Esophagus muscularis mucosa (tissue), 4 donors: ENCODE measurements at regions of chr2 and their contacts with region 1.

Region 1: DNA sequence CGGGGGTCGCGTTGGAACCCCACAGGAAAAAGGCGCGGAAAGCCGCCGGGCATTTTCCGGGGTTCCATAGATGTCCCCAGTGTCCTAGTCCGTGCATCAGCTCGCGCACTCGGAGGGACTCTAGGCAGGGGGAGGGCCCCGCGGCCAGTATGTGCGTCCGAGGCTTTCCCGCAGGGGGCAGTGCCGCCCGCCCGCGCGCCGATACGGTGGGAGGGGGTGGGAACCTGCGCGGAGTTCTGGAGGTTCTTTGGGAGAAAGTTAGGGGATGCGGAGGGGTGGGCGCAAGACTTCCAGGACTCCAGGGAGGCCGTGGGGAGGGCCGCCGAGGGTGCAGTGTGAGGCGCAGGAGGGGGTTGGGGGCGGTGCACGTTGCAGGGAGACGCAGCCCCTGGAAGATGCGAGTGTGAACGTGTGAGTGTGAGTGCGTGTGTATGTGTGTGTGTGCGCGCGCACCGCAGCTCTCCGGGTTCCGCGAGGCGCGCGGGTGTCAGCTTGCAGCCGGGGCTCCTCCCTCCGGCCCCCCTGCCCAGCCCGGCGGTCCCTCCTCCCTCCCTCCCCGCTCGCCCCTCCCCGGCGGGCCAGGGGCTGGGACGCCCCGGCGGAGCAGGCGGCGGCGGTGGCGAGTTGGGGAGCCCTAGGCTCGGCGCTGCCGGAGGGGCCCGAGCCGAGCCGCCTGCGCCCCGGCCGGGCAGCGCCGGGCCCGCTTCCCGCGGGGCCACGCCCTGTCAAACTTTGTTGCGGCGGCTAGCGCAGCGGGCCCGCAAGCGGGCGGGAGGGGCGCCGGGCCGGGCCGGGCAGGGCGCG is at the start of gene TCF7L1:
- DNase-seq: peak; percentile 94
- H3K4me3 ChIP-seq: peak within 1 kb of the TSS; percentile 72 to 96 (median 81)
- H3K27ac ChIP-seq: peak within 1 kb of the TSS; percentile 81 to 90 (median 84)
- H3K4me1 ChIP-seq: peaks cover 20 to 59% (median 50%) of the 10 kb centered on the region in 4 donors
- H3K27me3 ChIP-seq: no peaks in the 10 kb centered on the region
- CTCF ChIP-seq: peak in 2 of 3 experiments; percentile 84 to 93
- EP300 ChIP-seq: no peak
- POLR2A ChIP-seq: no peak
- total RNA-seq, gene TCF7L1: 5.6 to 23.2 (median 10.2) TPM

Region 2: DNA sequence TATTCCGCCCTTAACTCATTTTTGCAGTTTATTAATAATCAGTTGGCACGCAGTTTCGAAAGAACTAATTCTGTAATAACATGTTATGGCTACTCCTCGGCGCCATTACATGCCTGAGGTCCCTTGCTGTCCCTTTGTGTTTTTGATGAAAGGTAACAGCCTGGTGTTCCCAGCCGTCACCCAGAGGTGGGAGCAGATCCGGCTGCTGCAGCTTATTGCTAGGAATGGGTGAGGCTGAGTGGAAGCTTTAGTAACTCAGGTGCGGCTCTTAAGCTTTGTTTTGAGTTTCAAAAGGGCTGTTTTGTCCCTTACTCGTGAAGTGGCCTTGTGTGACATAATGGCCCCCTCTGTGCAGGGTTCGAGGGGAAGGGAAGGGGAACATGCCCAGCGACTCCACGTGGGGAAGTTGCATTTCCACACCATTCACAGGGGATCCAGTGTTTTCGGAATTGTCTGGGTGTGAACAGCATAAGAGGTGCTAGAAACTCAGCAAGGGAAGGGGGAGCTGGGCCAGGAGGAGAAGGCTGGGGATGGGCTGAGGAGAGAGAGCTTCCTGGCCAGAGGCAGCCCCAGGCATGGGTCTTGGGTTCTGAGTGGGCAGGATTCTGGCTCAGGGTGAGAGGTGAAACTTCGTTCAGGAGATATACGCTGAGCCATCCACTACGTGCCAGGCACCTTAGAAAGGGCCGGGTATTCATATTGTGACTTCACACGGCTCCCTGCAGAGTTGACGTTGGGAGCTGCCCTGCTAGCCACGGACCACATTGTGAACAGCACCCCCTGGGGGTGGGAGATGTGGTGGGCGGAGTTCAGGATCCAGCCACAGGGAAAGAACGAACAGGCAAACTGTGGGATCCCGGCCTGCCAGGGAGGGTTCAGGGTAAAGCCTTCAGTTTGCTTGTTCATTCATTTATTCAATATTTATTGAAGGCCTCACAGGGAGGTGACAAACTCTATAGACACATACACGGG is 110.4 kb after region 1 on chr2:
- intact Hi-C with region 1: loop called (anchors 1 kb)
- DNase-seq: no peak
- H3K4me3 ChIP-seq: no peak overlapping the region
- H3K27ac ChIP-seq: no peak overlapping the region
- H3K4me1 ChIP-seq: peaks cover 61 to 80% (median 70%) of the 10 kb centered on the region in 4 donors
- H3K27me3 ChIP-seq: no peaks in the 10 kb centered on the region
- CTCF ChIP-seq: peak; percentile 71 to 82 (median 74)
- EP300 ChIP-seq: no peak
- POLR2A ChIP-seq: no peak

Region 3: GRCh38 chr2:85288244-85288725 is 155.2 kb after region 1 on chr2:
- intact Hi-C with region 1: loop called (anchors 1 kb)
- DNase-seq: no peak
- H3K4me3 ChIP-seq: no peak overlapping the region
- H3K27ac ChIP-seq: no peak overlapping the region
- H3K4me1 ChIP-seq: peaks cover 5 to 13% (median 9%) of the 10 kb centered on the region in 4 donors
- H3K27me3 ChIP-seq: no peaks in the 10 kb centered on the region
- CTCF ChIP-seq: no peak
- EP300 ChIP-seq: no peak
- POLR2A ChIP-seq: no peak

Region 4: DNA sequence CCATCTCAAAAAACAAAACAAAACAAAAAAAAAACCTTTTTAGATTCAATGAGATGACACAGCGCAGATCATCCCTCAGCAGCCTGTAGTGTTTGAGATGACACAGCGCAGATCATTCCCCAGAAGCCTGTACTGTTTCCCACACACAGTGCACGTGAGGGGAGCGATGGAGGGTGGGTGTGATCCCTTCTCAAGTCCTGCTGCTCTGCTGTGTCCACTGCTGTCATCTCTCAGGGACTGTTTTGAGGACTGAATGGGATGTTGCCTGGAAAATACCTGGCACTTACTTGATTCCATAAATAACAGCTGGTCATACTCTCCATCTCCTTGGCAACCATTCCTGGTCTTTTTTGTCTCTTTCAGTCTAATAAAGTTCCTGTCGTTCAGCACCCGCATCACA is 169.1 kb after region 1 on chr2:
- intact Hi-C with region 1: loop called (anchors 5 kb)
- DNase-seq: no peak
- H3K4me3 ChIP-seq: no peak overlapping the region
- H3K27ac ChIP-seq: no peak overlapping the region
- H3K4me1 ChIP-seq: peaks cover 0 to 20% (median 10%) of the 10 kb centered on the region in 4 donors
- H3K27me3 ChIP-seq: no peaks in the 10 kb centered on the region
- CTCF ChIP-seq: no peak
- EP300 ChIP-seq: no peak
- POLR2A ChIP-seq: no peak

Region 5: DNA sequence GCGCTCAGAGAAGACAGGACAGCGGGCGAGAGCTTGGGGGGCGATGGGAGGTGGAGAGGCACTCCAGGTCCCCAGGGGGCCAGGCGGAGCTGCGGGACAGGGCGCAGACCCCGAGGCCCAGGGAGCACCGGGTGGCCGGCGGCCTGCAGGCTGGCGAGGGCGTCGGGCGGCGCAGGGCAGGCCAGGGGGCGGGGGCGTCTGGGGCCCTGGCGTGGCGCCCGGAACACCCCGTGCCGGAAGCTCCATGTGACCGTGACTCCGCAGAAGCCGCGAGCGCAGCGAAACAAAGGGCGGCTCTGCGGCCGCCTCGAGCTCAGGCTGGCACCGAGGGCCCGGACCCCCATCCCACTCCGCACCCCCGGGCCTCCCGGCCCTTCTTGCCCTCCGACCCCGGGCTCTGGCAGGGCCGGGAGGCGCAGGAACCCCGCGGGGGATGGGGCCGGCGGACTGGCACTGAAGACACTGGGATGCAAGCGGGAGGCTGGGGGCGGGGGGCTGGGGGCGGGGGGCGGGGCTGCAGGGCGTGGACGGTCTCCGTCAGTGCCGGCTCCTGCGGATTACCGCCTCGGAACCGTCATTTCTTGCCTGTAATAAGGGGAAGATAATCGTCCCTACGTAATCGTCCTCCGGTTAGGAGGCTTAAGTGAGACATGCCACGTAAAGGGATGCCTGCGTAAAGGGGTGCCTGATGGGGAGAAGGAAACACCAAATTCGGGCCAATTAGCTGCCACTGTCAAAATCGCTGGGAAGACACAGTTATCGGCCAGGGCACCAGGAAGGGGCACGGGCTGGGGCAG is 304.6 kb after region 1 on chr2:
- intact Hi-C with region 1: no loop called
- DNase-seq: peak; percentile 97
- H3K4me3 ChIP-seq: peak overlapping the region; percentile 54 to 62 (median 58)
- H3K27ac ChIP-seq: peak overlapping the region; percentile 94 to 99 (median 96)
- H3K4me1 ChIP-seq: peaks cover 48 to 68% (median 64%) of the 10 kb centered on the region in 4 donors
- H3K27me3 ChIP-seq: no peaks in the 10 kb centered on the region
- CTCF ChIP-seq: no peak
- EP300 ChIP-seq: peak; percentile 94
- POLR2A ChIP-seq: peak; percentile 76

Region 6: DNA sequence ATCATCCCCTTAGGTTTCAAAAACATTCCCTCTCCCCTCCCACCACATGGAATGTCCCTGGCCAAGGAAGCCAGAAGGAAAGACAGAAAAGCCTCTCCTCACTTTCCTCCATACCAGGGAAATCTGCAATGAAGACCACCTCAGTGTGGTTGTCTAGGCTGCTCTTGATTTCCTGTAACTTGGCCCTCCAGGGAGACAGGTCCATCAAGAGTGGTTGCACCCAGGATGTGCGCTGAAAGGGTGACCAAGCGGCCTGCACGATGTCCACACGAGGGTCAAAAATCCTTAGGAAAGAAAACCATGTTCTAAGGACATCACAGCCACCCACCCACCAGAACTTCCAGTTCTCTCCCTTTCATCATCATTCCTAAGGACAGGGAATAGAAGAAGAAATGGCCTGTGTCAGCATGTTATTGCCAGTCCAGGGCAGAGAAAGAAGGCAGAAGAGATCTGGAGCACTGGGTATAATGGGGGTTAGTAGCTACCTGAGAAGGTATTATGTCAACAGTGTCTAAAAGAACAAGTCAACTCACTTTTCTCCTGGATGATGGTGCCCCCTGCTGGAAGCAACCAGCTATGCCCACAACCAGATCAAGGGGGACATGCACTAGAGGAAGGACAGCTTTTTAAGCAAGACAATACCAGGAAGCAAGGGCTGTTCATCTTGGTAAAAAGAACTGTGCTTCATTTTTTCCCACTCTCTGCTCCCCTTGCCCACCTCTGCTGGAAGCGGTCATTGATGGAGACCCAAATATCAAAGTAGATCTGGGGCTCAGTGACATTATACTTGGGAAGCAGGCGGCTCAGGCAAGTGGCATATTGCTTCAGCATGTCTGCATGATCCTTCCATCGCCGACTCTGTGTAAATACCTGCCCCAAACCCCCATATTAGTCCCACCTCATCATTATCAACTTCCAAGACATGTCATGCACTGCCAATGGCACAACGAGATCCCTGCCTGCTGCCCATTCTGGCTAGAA is 419.0 kb after region 1 on chr2:
- intact Hi-C with region 1: no loop called
- DNase-seq: peak; percentile 95
- H3K4me3 ChIP-seq: no peak overlapping the region
- H3K27ac ChIP-seq: no peak overlapping the region
- H3K4me1 ChIP-seq: peaks cover 0 to 9% (median 0%) of the 10 kb centered on the region in 4 donors
- H3K27me3 ChIP-seq: no peaks in the 10 kb centered on the region
- CTCF ChIP-seq: peak; percentile 88 to 92 (median 92)
- EP300 ChIP-seq: no peak
- POLR2A ChIP-seq: no peak